Mucosa of descending colon (tissue), 3 donors: ENCODE measurements at regions of chr1 and their contacts with region 1.

Region 1: GRCh38 chr1:107590900-107591633 is 373.9 kb downstream of the VAV3 start:
- DNase-seq: no peak
- ATAC-seq: no peak
- H3K4me3 ChIP-seq: no peak overlapping the region
- H3K4me1 ChIP-seq: peaks cover 9% of the 10 kb centered on the region
- CTCF ChIP-seq: no peak

Region 2: GRCh38 chr1:107529502-107530149 is 61.4 kb before region 1 on chr1:
- intact Hi-C with region 1: loop called in 1 of 2 experiments (anchors 10 kb)
- DNase-seq: peak in 1 of 3 donors; percentile 50
- ATAC-seq: peak; percentile 84
- H3K4me3 ChIP-seq: no peak overlapping the region
- H3K4me1 ChIP-seq: peaks cover 3% of the 10 kb centered on the region
- CTCF ChIP-seq: no peak